Naive thymus-derived CD4-positive, alpha-beta T cell (primary cell): ENCODE measurements at regions of chr1 and their contacts with region 1.

Region 1: DNA sequence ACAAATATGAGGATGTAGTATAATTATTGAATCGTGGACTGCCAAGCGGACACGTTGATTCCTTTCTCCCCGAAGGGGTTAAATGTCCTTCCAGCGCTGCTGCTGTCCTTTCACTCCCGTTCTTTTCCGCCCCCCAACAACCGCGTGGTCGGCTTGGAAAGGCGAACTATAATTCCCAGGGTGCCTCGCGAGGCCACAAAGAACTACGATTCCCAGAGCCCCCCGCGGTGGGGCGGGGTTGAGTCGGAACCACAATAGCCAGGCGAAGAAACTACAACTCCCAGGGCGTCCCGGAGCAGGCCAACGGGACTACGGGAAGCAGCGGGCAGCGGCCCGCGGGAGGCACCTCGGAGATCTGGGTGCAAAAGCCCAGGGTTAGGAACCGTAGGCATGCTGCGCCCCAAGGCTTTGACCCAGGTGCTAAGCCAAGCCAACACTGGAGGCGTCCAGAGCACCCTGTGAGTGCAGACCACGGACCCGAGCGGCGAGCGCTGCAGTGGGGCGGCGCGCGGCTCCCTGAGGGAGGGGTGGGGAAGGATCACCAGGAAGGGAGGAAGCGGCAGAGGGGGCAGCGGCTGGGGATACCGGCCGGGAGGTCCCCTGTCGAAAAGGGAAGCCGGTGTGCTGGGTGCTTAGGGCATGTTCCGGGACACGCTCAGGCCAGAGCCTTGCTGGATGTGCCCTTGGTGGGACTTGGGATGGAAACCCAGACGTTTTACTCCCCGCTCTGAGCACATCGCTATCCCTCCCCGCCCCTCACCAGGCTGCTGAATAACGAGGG is at the start of gene LAMTOR2:
- DNase-seq: peak; percentile 86 to 96 (median 93)
- ATAC-seq: peak; percentile 87
- H3K4me3 ChIP-seq: peak within 1 kb of the TSS; percentile 78
- H3K4me3 Mint-ChIP-seq: peak within 1 kb of the TSS; percentile 92 to 100 (median 96)
- H3K27ac ChIP-seq: peak within 1 kb of the TSS; percentile 82
- H3K27ac Mint-ChIP-seq: peak within 1 kb of the TSS; percentile 85 to 98 (median 91)
- H3K4me1 ChIP-seq: peaks cover 9 to 17% of the 10 kb centered on the region in 2 donors
- H3K4me1 Mint-ChIP-seq: peaks cover 16 to 45% (median 35%) of the 10 kb centered on the region in 7 donors
- H3K27me3 ChIP-seq: no peaks in the 10 kb centered on the region
- H3K27me3 Mint-ChIP-seq: no peaks in the 10 kb centered on the region
- total RNA-seq, gene LAMTOR2: 13.3 to 66.1 (median 27.9) TPM

Region 2: GRCh38 chr1:154220071-154220969 is 1834.4 kb before region 1 on chr1 and contains the start of gene UBAP2L:
- CTCF ChIA-PET with region 1: no interaction called
- POLR2A ChIA-PET with region 1: no interaction called
- intact Hi-C with region 1: loop called in 1 of 2 experiments (anchors 2 kb)
- DNase-seq: peak; percentile 92 to 99 (median 99)
- ATAC-seq: peak; percentile 91
- H3K4me3 ChIP-seq: peak within 1 kb of the TSS; percentile 95
- H3K4me3 Mint-ChIP-seq: peak within 1 kb of the TSS; percentile 83 to 100 (median 98)
- H3K27ac ChIP-seq: peak within 1 kb of the TSS; percentile 99
- H3K27ac Mint-ChIP-seq: peak within 1 kb of the TSS; percentile 96 to 100 (median 99)
- H3K4me1 ChIP-seq: peaks cover 42 to 45% of the 10 kb centered on the region in 2 donors
- H3K4me1 Mint-ChIP-seq: peaks cover 46 to 76% (median 64%) of the 10 kb centered on the region in 7 donors
- H3K27me3 ChIP-seq: no peaks in the 10 kb centered on the region
- H3K27me3 Mint-ChIP-seq: peaks cover 0 to 4% (median 0%) of the 10 kb centered on the region in 5 donors
- total RNA-seq, gene UBAP2L: 183 to 235 (median 189) TPM

Region 3: DNA sequence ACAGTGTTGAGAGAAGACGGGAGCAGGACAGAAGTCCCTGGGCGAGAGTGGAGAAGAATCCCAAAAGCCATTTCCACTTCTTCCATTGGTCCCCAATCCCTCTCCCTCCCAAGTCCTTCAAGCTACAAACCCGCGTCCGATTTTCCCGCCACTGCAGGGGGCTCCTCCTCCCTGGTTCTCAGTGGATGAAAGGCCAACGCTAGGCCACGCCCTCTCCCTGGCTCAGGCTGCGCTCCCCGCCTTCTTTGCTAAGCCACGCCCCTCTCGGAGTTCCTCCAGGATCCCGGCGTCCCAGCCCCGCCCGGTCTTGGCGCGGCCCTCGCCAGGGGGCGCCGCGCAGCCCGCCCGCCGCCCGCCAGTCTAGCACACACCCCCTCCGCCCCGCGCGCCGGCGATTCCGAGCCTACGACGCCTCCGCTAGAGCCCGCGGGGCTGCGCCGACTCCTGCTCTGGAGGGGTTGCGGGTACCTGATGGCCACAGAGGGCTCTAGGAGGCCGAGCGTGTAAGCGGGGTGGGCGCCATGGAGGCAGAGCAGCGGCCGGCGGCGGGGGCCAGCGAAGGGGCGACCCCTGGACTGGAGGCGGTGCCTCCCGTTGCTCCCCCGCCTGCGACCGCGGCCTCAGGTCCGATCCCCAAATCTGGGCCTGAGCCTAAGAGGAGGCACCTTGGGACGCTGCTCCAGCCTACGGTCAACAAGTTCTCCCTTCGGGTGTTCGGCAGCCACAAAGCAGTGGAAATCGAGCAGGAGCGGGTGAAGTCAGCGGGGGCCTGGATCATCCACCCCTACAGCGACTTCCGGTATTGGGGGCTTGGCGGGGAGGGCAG is 777.4 kb before region 1 on chr1 and contains the start of gene HCN3:
- CTCF ChIA-PET with region 1: no interaction called
- POLR2A ChIA-PET with region 1: no interaction called
- intact Hi-C with region 1: loop called in 1 of 2 experiments (anchors 10 kb)
- DNase-seq: peak; percentile 68 to 95 (median 70)
- ATAC-seq: peak; percentile 71
- H3K4me3 ChIP-seq: peak within 1 kb of the TSS; percentile 59
- H3K4me3 Mint-ChIP-seq: peak within 1 kb of the TSS; percentile 75 to 90 (median 86)
- H3K27ac ChIP-seq: peak within 1 kb of the TSS; percentile 36
- H3K27ac Mint-ChIP-seq: peak within 1 kb of the TSS in 8 of 9 donors; percentile 44 to 83 (median 69)
- H3K4me1 ChIP-seq: peaks cover 18 to 19% of the 10 kb centered on the region in 2 donors
- H3K4me1 Mint-ChIP-seq: peaks cover 24 to 47% (median 38%) of the 10 kb centered on the region in 7 donors
- H3K27me3 ChIP-seq: no peaks in the 10 kb centered on the region
- H3K27me3 Mint-ChIP-seq: peaks cover 0 to 11% (median 0%) of the 10 kb centered on the region in 5 donors
- total RNA-seq, gene HCN3: 1.6 to 3.3 (median 2.8) TPM

Region 4: DNA sequence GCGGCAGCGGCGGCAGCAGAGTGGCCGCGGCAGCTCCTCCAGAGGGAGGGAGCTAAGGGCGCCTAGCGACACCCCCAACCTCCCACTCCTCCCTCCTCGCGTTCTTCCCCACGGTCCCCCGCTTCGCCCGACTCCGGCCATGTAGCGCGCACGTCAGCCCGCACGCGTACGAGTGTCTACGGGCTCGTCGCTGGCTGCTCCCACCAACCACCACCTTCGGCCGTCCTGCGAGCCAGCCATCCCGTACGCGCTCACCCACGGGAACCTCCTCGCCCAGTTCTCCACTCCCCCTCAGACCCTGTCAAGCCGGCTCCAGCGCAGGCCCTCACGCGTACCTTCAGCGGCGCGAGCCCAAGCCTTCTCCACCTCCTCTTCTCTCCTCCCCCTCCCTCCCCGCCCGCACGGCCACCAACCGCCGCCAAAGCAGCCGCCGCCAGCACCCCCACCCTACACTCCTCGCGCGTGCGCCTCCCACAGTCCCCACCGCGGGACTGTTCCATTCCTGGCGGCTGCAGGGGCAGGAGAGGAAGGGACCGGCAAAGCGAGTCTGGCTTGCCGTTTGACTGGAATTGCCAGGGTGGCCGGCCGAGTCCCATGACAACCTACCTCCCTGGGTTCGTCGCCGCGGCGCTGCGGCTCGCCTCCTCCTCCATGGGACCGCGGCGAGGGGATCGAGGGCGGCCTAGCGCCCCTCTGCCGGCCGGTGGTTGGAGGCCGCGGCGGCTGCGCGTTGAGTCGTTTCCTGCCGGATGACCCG is 366.2 kb before region 1 on chr1 and contains the start of gene YY1AP1:
- CTCF ChIA-PET with region 1: no interaction called
- POLR2A ChIA-PET with region 1: no interaction called
- intact Hi-C with region 1: loop called in 1 of 2 experiments (anchors 10 kb)
- DNase-seq: peak; percentile 87 to 96 (median 92)
- ATAC-seq: peak; percentile 96
- H3K4me3 ChIP-seq: peak within 1 kb of the TSS; percentile 99
- H3K4me3 Mint-ChIP-seq: peak within 1 kb of the TSS; percentile 93 to 98 (median 96)
- H3K27ac ChIP-seq: peak within 1 kb of the TSS; percentile 91
- H3K27ac Mint-ChIP-seq: peak within 1 kb of the TSS; percentile 90 to 98 (median 96)
- H3K4me1 ChIP-seq: peaks cover 15 to 30% of the 10 kb centered on the region in 2 donors
- H3K4me1 Mint-ChIP-seq: peaks cover 37 to 81% (median 70%) of the 10 kb centered on the region in 7 donors
- H3K27me3 ChIP-seq: no peaks in the 10 kb centered on the region
- H3K27me3 Mint-ChIP-seq: no peaks in the 10 kb centered on the region
- total RNA-seq, gene YY1AP1: 81.2 to 130 (median 88.2) TPM

Region 5: DNA sequence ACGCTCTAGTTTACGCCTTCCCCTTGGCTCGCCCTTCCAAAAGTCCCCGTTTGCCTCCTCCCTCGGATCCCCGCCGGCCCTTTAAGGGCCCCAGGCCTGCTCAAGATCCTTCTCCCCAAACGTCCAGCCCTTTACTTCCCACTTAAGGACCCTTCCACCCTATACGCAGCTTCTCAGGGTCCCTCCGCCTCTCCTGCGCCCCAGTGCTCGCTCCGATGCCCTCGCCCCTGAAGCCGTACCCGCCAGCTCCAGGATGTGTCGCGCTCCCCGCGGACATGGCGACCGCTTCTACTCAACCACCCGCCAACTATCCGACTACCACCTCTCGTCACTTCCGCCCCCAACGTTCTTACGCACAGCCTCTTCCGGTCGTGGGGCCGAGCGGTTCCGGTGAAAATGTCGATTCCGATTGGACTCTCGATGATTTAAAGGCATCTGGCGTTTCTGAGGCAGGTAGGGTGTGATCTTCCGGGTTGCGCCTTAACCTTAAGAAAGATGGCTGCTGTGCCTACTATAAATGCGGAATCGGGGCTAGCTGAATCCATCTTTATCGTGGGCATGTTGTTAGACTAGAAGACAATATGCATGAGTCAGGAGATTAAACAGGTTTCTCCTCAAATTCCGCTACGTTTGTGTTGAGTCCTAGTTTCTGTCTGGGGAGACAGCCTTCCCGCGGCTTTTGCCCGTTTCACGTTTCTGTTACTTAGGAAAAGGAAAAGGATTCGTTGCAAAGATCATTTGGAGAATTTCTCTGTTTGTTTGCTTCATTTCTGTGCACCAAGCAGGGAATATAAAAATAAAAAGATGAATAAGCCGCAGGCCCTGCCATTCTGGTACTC is 120.4 kb before region 1 on chr1 and contains the start of gene KHDC4:
- CTCF ChIA-PET with region 1: no interaction called
- POLR2A ChIA-PET with region 1: interaction called, 3 read pairs
- intact Hi-C with region 1: loop called (anchors 1 kb)
- DNase-seq: peak; percentile 79 to 98 (median 97)
- ATAC-seq: peak; percentile 97
- H3K4me3 ChIP-seq: peak within 1 kb of the TSS; percentile 87
- H3K4me3 Mint-ChIP-seq: no peak within 1 kb of the TSS
- H3K27ac ChIP-seq: peak within 1 kb of the TSS; percentile 89
- H3K27ac Mint-ChIP-seq: peak within 1 kb of the TSS in 1 of 9 donors; percentile 22
- H3K4me1 ChIP-seq: peaks cover 40 to 42% of the 10 kb centered on the region in 2 donors
- H3K4me1 Mint-ChIP-seq: peaks cover 15 to 42% (median 37%) of the 10 kb centered on the region in 7 donors
- H3K27me3 ChIP-seq: no peaks in the 10 kb centered on the region
- H3K27me3 Mint-ChIP-seq: no peaks in the 10 kb centered on the region
- total RNA-seq, gene KHDC4: 64.6 to 117 (median 79.8) TPM

Region 6: GRCh38 chr1:156082309-156083091 is 27.8 kb after region 1 on chr1 and contains the start of gene MEX3A:
- CTCF ChIA-PET with region 1: no interaction called
- POLR2A ChIA-PET with region 1: no interaction called
- intact Hi-C with region 1: loop called in 1 of 2 experiments (anchors 1 kb)
- DNase-seq: peak; percentile 35 to 70 (median 52)
- ATAC-seq: peak; percentile 90
- H3K4me3 ChIP-seq: peak within 1 kb of the TSS; percentile 83
- H3K4me3 Mint-ChIP-seq: peak within 1 kb of the TSS; percentile 73 to 91 (median 85)
- H3K27ac ChIP-seq: peak within 1 kb of the TSS; percentile 15
- H3K27ac Mint-ChIP-seq: peak within 1 kb of the TSS in 4 of 9 donors; percentile 8 to 54 (median 31)
- H3K4me1 ChIP-seq: peaks cover 3 to 5% of the 10 kb centered on the region in 2 donors
- H3K4me1 Mint-ChIP-seq: peaks cover 0 to 17% (median 6%) of the 10 kb centered on the region in 7 donors
- H3K27me3 ChIP-seq: peaks cover 3 to 9% of the 10 kb centered on the region in 2 donors
- H3K27me3 Mint-ChIP-seq: peaks cover 26 to 89% (median 29%) of the 10 kb centered on the region in 5 donors
- total RNA-seq, gene MEX3A: 0.05 to 0.15 (median 0.13) TPM in 4 of 5 experiments, not detected in the other

Region 7: DNA sequence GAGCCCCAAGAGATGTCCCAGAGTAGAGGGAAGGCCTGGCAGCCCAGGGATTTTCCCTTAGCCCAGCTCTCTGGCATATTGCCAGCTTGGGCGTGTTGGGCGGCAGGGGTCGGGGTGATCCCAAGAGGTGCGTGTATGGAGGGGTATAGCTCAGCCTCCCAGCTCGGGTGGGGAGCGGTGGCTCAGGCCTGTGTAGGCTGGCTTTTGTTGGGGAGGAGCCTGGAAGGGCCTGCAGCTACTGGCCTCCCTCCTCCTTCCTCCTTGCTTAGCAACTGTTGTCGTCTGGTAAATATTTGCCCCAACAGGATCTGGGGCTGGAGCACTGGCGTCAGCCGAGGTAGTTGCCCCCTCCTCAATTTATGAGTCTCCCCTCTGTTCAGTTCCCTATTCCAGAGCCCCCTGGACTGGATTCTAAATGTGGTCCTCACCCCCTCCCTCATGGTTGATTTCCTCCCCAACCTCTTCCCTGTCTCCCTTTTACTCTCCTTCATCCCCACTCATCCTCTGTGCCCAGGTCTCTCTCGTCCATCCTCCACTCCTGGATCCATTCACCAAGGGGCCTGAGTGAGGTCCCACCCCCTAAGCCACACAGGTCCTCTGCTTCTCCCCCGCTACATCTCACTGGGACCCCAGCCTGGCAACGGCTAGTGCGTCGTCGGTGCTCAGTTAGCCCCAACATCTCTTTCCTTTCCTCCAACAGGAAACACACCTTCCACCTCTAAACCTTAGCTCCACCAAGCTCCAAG is 49.5 kb after region 1 on chr1:
- CTCF ChIA-PET with region 1: no interaction called
- POLR2A ChIA-PET with region 1: no interaction called
- intact Hi-C with region 1: no loop called
- DNase-seq: peak in 5 of 9 donors; percentile 28 to 60 (median 32)
- ATAC-seq: peak; percentile 36
- H3K4me3 ChIP-seq: no peak overlapping the region
- H3K4me3 Mint-ChIP-seq: peak overlapping the region in 4 of 10 donors; percentile 20 to 82 (median 60)
- H3K27ac ChIP-seq: no peak overlapping the region
- H3K27ac Mint-ChIP-seq: peak overlapping the region; percentile 31 to 99 (median 93)
- H3K4me1 ChIP-seq: peaks cover 12 to 38% of the 10 kb centered on the region in 2 donors
- H3K4me1 Mint-ChIP-seq: peaks cover 12 to 54% (median 28%) of the 10 kb centered on the region in 7 donors
- H3K27me3 ChIP-seq: no peaks in the 10 kb centered on the region
- H3K27me3 Mint-ChIP-seq: peaks cover 0 to 53% (median 0%) of the 10 kb centered on the region in 5 donors

Region 8: DNA sequence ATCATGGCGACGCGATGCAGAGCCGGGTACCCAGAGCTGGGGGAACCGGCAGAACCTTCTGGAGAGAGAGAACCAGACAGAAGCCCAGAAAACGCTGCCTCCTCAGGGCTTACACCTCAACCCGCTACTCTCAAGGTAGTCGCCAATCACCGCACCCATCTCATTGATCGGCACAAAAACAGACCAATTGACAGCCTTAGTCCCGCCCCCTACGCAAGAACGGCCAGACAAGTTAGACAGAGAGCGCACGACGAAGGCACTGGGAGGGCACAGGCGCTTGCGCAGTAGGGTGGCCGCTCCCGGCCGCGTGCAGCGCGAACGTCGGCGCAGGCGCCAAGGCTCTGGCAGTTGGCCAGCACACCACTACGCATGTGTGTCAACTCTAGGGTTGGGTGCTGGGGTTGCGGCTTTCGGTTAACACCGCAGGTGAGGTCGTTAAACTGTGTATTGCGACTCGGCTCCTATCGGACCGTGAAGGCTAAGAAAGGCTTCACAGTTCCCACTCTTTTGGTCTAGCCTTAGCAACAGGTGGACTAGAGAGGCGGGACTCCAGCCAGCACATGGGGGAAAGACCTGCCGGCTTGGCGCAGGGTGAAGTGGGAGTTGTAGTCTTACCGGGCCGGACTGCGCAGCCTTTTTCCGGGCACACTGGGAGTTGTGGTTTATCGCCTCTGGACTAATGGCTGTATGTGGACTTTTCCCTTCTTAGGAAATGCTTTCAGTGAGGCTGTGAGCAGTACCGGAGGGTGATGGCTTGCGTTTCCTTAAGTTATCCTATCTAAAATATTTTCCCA is 283.7 kb after region 1 on chr1 and contains the starts of genes CCT3 and TSACC:
- CTCF ChIA-PET with region 1: no interaction called
- POLR2A ChIA-PET with region 1: no interaction called
- intact Hi-C with region 1: loop called (anchors 1 to 5 kb)
- DNase-seq: peak; percentile 99 to 100 (median 100)
- ATAC-seq: peak; percentile 97
- H3K4me3 ChIP-seq: peak within 1 kb of the TSS; percentile 83
- H3K4me3 Mint-ChIP-seq: peak within 1 kb of the TSS; percentile 97 to 99 (median 99)
- H3K27ac ChIP-seq: peak within 1 kb of the TSS; percentile 76
- H3K27ac Mint-ChIP-seq: peak within 1 kb of the TSS; percentile 97 to 99 (median 98)
- H3K4me1 ChIP-seq: peaks cover 11 to 17% of the 10 kb centered on the region in 2 donors
- H3K4me1 Mint-ChIP-seq: peaks cover 16 to 49% (median 40%) of the 10 kb centered on the region in 7 donors
- H3K27me3 ChIP-seq: no peaks in the 10 kb centered on the region
- H3K27me3 Mint-ChIP-seq: peaks cover 0 to 12% (median 0%) of the 10 kb centered on the region in 5 donors
- total RNA-seq, gene CCT3: 78.0 to 282 (median 114) TPM
- total RNA-seq, gene TSACC: 1.1 TPM in 1 of 5 experiments, not detected in the others